ENCODE measurements at regions of chr6 and their contacts with region 1.

Region 1: GRCh38 chr6:165439928-165440554 is 130.6 kb upstream of the C6orf118 start:
- DNase-seq: no peak
- H3K4me3 Mint-ChIP-seq: no peak overlapping the region
- H3K27ac Mint-ChIP-seq: no peak overlapping the region
- H3K4me1 Mint-ChIP-seq: no peaks in the 10 kb centered on the region
- H3K27me3 Mint-ChIP-seq: peaks cover 5% of the 10 kb centered on the region

Region 2: DNA sequence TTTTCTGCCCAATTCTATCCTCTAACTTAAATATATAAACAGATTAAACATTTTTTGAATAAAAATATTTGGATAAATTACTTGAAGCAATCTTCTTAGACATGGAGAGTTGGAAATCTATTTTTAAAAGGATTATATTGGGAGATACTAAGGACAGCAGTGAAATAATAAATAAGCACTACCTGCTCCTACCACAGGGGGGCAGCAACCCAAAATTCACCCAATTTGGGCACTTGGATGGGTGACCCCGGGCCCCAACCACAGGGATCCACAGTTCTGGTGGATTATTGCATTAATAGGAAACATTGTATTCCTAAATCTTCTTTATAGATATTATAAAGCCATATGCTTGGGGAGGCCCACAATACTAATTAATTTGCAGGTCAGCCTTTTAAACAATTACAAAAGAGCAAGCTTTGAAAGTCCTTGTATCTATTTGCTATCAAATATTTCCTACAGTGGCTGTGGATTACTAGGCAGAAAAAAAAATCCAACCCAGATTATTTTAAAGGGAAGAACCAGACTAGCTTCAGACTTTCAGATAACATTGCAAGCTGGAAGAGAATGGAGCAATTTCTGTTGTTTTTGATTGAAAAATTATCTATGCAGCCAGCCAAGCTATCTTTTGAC is 289.4 kb after region 1 on chr6:
- intact Hi-C with region 1: loop called (anchors 2 kb)
- DNase-seq: no peak
- H3K4me3 Mint-ChIP-seq: no peak overlapping the region
- H3K27ac Mint-ChIP-seq: no peak overlapping the region
- H3K4me1 Mint-ChIP-seq: no peaks in the 10 kb centered on the region
- H3K27me3 Mint-ChIP-seq: no peaks in the 10 kb centered on the region